ENCODE measurements at regions of chr1 and their contacts with region 1.

Region 1: DNA sequence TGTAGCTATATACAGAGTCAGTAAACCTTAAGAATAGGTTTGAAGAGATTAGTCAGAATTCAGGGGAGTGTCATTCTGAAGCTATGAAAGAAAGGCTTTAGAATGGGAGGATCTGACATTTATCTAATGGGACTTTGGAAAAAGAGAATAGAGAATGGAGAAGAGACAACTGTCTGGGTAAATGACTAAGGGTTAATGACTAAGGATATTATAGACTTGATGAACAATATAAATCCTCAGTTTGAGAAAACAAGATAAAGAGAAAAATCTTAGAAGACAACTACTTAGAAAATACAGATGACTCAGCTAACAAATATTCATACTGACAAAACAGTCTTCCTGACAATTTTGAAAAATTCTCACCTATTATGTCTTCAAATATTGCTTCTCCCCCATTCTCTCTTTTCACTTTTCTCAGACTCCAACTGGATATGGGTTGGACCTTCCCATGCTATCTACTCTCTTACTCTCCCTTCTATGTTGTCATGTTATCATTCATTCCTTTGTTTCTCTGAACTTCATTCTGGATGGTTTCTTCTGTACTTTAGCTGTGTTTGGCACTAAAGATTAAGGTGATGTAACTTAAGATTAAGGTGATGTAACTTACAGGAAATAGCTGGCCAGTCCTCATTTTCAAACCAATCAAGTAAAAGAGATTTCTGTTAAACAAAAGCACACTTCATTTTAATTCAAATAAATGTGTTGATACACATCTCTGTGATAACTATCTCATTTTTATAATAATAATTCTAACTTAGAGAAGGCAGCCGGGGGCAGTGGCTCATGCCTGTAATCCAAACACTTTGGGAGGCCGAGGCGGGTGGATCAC is 20.3 kb downstream of the SLC16A1 start:
- DNase-seq: peak; percentile 64
- H3K4me3 ChIP-seq: no peak overlapping the region
- H3K27ac ChIP-seq: peak overlapping the region; percentile 86
- H3K4me1 ChIP-seq: peaks cover 42% of the 10 kb centered on the region
- H3K27me3 ChIP-seq: no peaks in the 10 kb centered on the region
- CTCF ChIP-seq: no peak

Region 2: DNA sequence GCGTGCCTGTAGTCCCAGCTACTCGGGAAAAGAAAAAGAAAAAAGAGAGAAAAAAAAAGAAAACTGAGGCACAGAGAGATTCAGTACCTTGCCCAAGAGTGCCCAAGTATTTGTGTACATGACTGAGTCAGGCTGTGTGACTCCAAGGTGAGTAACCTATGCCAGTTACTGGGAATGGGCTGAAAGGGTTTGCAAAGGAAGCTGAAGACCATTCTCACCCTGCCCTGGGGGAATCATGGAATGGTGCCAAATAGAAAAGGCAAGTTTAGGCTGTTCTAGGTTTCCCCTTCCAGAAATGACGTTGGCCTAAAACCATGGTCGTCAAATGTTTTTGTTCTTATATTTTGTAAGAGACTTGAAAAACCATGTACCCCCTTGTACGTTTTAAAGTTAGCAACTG is 99.4 kb after region 1 on chr1:
- CTCF ChIA-PET with region 1: no interaction called
- dilution Hi-C with region 1: no loop called
- in situ Hi-C with region 1: no loop called
- intact Hi-C with region 1: loop called (anchors 2 kb)
- DNase-seq: peak; percentile 99
- H3K4me3 ChIP-seq: no peak overlapping the region
- H3K27ac ChIP-seq: peak overlapping the region; percentile 94
- H3K4me1 ChIP-seq: peaks cover 24% of the 10 kb centered on the region
- H3K27me3 ChIP-seq: no peaks in the 10 kb centered on the region
- CTCF ChIP-seq: no peak

Region 3: GRCh38 chr1:113153116-113153803 is 217.6 kb after region 1 on chr1:
- CTCF ChIA-PET with region 1: no interaction called
- dilution Hi-C with region 1: no loop called
- in situ Hi-C with region 1: no loop called
- intact Hi-C with region 1: no loop called
- DNase-seq: peak; percentile 66
- H3K4me3 ChIP-seq: no peak overlapping the region
- H3K27ac ChIP-seq: no peak overlapping the region
- H3K4me1 ChIP-seq: peaks cover 8% of the 10 kb centered on the region
- H3K27me3 ChIP-seq: no peaks in the 10 kb centered on the region
- CTCF ChIP-seq: peak in 1 of 2 donors; percentile 5